Natural killer cell (primary cell): ENCODE measurements at regions of chr18 and their contacts with region 1.

Region 1: GRCh38 chr18:74972354-74972753 is 236.6 kb downstream of the PTGR3 start:
- DNase-seq: no peak
- ATAC-seq: no peak
- H3K4me3 ChIP-seq: no peak overlapping the region
- H3K4me3 Mint-ChIP-seq: no peak overlapping the region
- H3K27ac ChIP-seq: no peak overlapping the region
- H3K27ac Mint-ChIP-seq: peak overlapping the region in 1 of 2 donors; percentile 21
- H3K4me1 ChIP-seq: no peaks in the 10 kb centered on the region
- H3K4me1 Mint-ChIP-seq: peaks cover 6 to 19% of the 10 kb centered on the region in 2 donors
- H3K27me3 ChIP-seq: no peaks in the 10 kb centered on the region
- H3K27me3 Mint-ChIP-seq: no peaks in the 10 kb centered on the region
- CTCF ChIP-seq: no peak

Region 2: GRCh38 chr18:75005626-75006025 is 33.3 kb after region 1 on chr18:
- intact Hi-C with region 1: loop called (anchors 5 kb)
- DNase-seq: no peak
- ATAC-seq: no peak
- H3K4me3 ChIP-seq: no peak overlapping the region
- H3K4me3 Mint-ChIP-seq: no peak overlapping the region
- H3K27ac ChIP-seq: no peak overlapping the region
- H3K27ac Mint-ChIP-seq: no peak overlapping the region
- H3K4me1 ChIP-seq: no peaks in the 10 kb centered on the region
- H3K4me1 Mint-ChIP-seq: peaks cover 7 to 24% of the 10 kb centered on the region in 2 donors
- H3K27me3 ChIP-seq: no peaks in the 10 kb centered on the region
- H3K27me3 Mint-ChIP-seq: peaks cover 8 to 16% of the 10 kb centered on the region in 2 donors
- CTCF ChIP-seq: no peak

Region 3: DNA sequence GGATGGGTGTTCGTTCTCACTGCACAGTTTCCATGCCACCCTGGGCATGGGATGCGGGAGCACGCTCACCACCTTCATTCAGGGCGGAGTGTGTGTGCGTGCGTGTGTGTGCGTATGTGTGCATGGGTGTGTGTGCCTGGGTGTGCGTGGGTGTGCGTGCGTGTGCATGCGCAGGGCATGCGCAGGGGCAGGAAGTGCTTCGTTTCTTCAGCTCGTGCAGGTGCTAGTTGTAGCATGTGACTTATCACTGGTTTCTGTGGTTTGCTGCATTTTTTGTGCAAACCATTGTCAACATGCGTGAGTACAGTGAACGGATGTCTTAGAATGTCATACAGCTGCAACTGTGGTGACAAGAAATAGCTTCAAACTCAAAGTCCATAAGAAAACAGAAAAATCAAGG is 57.1 kb after region 1 on chr18:
- intact Hi-C with region 1: loop called (anchors 5 kb)
- DNase-seq: peak in 1 of 2 donors; percentile 54
- ATAC-seq: peak; percentile 47 to 53 (median 50)
- H3K4me3 ChIP-seq: no peak overlapping the region
- H3K4me3 Mint-ChIP-seq: peak overlapping the region; percentile 17
- H3K27ac ChIP-seq: no peak overlapping the region
- H3K27ac Mint-ChIP-seq: peak overlapping the region; percentile 65 to 67
- H3K4me1 ChIP-seq: peaks cover 17% of the 10 kb centered on the region
- H3K4me1 Mint-ChIP-seq: peaks cover 38 to 45% of the 10 kb centered on the region in 2 donors
- H3K27me3 ChIP-seq: no peaks in the 10 kb centered on the region
- H3K27me3 Mint-ChIP-seq: no peaks in the 10 kb centered on the region
- CTCF ChIP-seq: no peak